ENCODE measurements at regions of chr3 and their contacts with region 1.

Region 1: DNA sequence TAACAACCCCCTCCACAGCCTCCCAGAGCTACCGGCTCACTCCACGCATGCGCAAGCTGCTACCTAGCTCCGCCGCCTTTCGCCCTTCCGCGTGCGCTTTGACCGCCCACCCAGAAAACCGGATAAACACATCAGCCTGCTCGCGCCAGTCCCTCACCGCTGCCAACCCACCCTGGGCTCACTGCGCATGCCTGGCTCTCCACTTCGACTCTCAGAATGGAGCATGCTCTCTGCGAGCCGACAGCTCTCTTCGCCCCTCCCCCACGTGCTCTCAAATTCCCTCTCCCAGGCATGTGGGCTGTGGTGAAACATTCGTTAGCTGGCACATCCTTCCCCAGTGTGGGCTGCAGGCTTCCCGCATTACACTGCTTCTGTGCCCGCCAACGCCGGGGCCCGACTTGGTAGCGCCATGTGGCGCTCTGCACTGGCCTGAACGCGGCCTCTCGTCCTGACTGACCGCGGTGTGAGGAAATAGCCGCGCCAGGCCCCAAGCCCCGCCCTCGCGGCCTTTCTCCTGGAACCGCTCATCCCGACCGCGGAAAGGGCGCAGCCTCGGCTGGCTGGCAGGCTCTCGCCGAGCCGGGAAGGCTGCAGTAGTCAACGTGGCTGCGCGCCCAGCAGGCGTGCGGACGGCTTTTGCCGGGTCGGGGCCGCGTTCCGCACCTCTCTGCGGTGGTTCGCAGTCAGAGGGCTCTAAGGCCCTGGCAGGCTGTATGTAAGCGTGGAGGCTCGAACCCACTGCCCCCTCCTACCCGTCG is 445 bp upstream of the MSL2 start:
- DNase-seq: peak; percentile 100
- H3K4me3 ChIP-seq: peak overlapping the region; percentile 21 to 88 (median 84)
- H3K27ac ChIP-seq: peak overlapping the region; percentile 91 to 94
- H3K4me1 ChIP-seq: peaks cover 16 to 41% (median 32%) of the 10 kb centered on the region in 4 experiments
- H3K27me3 ChIP-seq: no peaks in the 10 kb centered on the region

Region 2: DNA sequence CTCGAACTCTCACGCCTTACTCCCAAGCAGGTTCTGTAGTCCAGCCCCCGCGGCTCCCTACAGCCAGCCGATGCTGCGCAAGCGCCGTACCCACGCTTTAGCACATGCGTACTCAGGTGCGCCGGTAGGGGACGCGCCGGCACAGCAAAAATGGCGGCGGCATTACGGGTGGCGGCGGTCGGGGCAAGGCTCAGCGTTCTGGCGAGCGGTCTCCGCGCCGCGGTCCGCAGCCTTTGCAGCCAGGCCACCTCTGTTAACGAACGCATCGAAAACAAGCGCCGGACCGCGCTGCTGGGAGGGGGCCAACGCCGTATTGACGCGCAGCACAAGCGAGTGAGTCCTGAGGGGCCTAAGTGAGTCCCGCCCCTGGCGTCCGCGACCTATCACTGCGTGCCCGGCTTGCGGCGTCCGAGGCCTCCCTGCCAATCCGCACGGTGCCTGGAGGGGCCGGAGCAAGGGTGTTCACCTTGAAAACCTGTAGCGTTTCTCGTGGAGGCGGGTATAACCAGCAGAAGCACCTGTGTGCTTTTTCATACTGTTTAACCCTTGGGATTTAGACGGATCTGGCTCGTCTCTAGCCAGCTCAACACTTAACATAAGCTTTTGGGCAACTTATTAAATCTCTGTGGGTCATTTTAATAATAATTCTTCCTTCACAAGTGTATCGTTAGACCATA is 53.8 kb after region 1 on chr3 and contains the start of gene PCCB:
- CTCF ChIA-PET with region 1: interaction called, 10 read pairs
- POLR2A ChIA-PET with region 1: interaction called, 13 read pairs
- DNase-seq: peak; percentile 94 to 95 (median 95)
- H3K4me3 ChIP-seq: peak within 1 kb of the TSS; percentile 46 to 80 (median 71)
- H3K27ac ChIP-seq: peak within 1 kb of the TSS; percentile 58 to 85
- H3K4me1 ChIP-seq: peaks cover 10 to 26% (median 23%) of the 10 kb centered on the region in 4 experiments
- H3K27me3 ChIP-seq: no peaks in the 10 kb centered on the region